CD14-positive monocyte (primary cell): ENCODE measurements at regions of chr16 and their contacts with region 1.

Region 1: GRCh38 chr16:69339289-69340108 is at the starts of genes COG8 and NIP7:
- DNase-seq: peak; percentile 93 to 96 (median 94)
- H3K4me3 ChIP-seq: peak within 1 kb of the TSS; percentile 80 to 93 (median 88)
- H3K4me3 Mint-ChIP-seq: peak within 1 kb of the TSS; percentile 99 to 100
- H3K27ac ChIP-seq: peak within 1 kb of the TSS; percentile 78 to 87
- H3K27ac Mint-ChIP-seq: peak within 1 kb of the TSS; percentile 93 to 99 (median 96)
- H3K4me1 ChIP-seq: peaks cover 20 to 33% of the 10 kb centered on the region in 2 donors
- H3K4me1 Mint-ChIP-seq: peaks cover 25% of the 10 kb centered on the region
- H3K27me3 ChIP-seq: no peaks in the 10 kb centered on the region
- H3K27me3 Mint-ChIP-seq: peaks cover 0 to 3% (median 0%) of the 10 kb centered on the region in 3 donors
- CTCF ChIP-seq: peak; percentile 88
- polyA plus RNA-seq, gene COG8: 11.9 to 24.1 (median 21.6) TPM
- polyA plus RNA-seq, gene NIP7: 3.0 to 16.4 (median 14.2) TPM

Region 2: GRCh38 chr16:68985855-68986254 is 353.6 kb before region 1 on chr16:
- intact Hi-C with region 1: no loop called
- DNase-seq: no peak
- H3K4me3 ChIP-seq: no peak overlapping the region
- H3K4me3 Mint-ChIP-seq: no peak overlapping the region
- H3K27ac ChIP-seq: no peak overlapping the region
- H3K27ac Mint-ChIP-seq: no peak overlapping the region
- H3K4me1 ChIP-seq: no peaks in the 10 kb centered on the region
- H3K4me1 Mint-ChIP-seq: no peaks in the 10 kb centered on the region
- H3K27me3 ChIP-seq: no peaks in the 10 kb centered on the region
- H3K27me3 Mint-ChIP-seq: peaks cover 0 to 2% (median 0%) of the 10 kb centered on the region in 3 donors
- CTCF ChIP-seq: no peak

Region 3: GRCh38 chr16:69381231-69381630 is 41.7 kb after region 1 on chr16:
- intact Hi-C with region 1: loop called (anchors 5 kb)
- DNase-seq: no peak
- H3K4me3 ChIP-seq: no peak overlapping the region
- H3K4me3 Mint-ChIP-seq: peak overlapping the region; percentile 6 to 35
- H3K27ac ChIP-seq: peak overlapping the region in 1 of 2 donors; percentile 64
- H3K27ac Mint-ChIP-seq: peak overlapping the region; percentile 62 to 87 (median 78)
- H3K4me1 ChIP-seq: peaks cover 18 to 29% of the 10 kb centered on the region in 2 donors
- H3K4me1 Mint-ChIP-seq: peaks cover 24% of the 10 kb centered on the region
- H3K27me3 ChIP-seq: no peaks in the 10 kb centered on the region
- H3K27me3 Mint-ChIP-seq: peaks cover 0 to 1% (median 0%) of the 10 kb centered on the region in 3 donors
- CTCF ChIP-seq: no peak

Region 4: DNA sequence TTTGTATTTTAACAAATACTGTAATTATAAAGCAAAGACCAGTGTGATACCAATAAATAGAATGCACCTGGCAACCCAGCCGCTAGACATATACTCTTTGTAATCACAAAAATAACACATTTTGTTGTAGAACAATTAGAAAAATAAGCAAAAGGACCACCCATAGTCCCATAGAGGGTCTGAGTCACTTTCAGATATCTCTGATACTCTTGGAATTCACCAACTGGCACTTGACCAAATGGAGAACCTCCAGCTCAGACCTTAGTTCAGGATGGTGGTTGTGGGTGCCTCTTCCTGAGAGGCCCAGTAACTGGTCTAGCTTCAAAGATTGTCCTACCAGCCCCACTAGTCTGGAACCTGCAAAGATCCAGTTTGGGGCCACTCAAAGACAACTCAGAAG is 47.1 kb after region 1 on chr16:
- intact Hi-C with region 1: loop called (anchors 5 kb)
- DNase-seq: no peak
- H3K4me3 ChIP-seq: no peak overlapping the region
- H3K4me3 Mint-ChIP-seq: no peak overlapping the region
- H3K27ac ChIP-seq: no peak overlapping the region
- H3K27ac Mint-ChIP-seq: peak overlapping the region in 1 of 7 donors; percentile 82
- H3K4me1 ChIP-seq: peaks cover 15 to 21% of the 10 kb centered on the region in 2 donors
- H3K4me1 Mint-ChIP-seq: peaks cover 19% of the 10 kb centered on the region
- H3K27me3 ChIP-seq: no peaks in the 10 kb centered on the region
- H3K27me3 Mint-ChIP-seq: peaks cover 0 to 1% (median 1%) of the 10 kb centered on the region in 3 donors
- CTCF ChIP-seq: no peak

Region 5: DNA sequence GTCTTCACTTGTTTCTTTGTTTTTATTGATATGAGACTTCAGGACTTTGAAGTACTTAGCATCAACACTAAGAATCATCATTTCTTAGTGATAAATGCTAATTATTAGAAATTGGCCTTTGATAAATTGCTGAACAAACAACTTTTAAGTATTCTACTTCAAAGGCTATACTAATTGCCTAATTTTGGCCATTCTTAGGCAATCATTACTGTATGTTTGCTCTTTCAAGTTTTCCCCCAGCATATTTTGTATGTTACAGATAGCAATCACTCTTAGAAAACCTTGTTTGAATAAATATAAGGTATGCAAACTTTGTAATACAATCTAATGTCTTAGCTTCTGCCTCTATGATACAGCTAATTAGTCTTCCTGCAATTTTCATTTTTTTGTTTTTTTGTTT is 340.9 kb after region 1 on chr16:
- intact Hi-C with region 1: no loop called
- DNase-seq: no peak
- H3K4me3 ChIP-seq: no peak overlapping the region
- H3K4me3 Mint-ChIP-seq: no peak overlapping the region
- H3K27ac ChIP-seq: no peak overlapping the region
- H3K27ac Mint-ChIP-seq: no peak overlapping the region
- H3K4me1 ChIP-seq: no peaks in the 10 kb centered on the region
- H3K4me1 Mint-ChIP-seq: no peaks in the 10 kb centered on the region
- H3K27me3 ChIP-seq: no peaks in the 10 kb centered on the region
- H3K27me3 Mint-ChIP-seq: no peaks in the 10 kb centered on the region
- CTCF ChIP-seq: no peak

Region 6: DNA sequence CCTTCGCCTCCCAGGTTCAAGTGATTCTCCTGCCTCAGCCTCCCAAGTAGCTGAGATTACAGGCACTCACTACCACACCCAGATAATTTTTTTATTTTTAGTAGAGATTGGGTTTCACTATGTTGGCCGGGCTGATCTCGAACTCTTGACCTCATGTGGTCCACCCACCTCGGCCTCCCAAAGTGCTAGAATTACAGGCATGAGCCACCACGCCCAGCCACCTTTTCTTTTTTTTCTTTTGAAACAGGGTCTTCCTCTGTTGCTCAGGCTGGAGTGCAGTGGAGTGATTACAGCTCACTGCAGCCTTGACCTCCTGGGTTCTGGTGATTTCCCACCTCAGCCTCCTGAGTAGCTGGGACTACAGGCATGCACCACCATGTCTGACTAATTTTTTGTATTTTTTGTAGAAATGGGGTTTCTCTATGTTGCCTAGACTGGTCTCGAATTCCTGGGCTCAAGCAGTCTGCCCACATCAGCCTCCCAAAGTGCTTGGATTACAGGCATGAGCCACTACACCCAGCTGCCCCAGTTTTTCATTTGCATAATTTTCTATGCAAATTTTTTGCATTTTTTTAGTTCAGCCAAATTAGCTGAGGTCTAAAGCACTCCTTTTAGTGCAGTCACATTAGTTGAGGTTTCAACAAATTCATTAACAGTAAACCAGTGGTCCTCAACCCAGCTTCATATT is 433.9 kb after region 1 on chr16:
- intact Hi-C with region 1: no loop called
- DNase-seq: no peak
- H3K4me3 ChIP-seq: no peak overlapping the region
- H3K4me3 Mint-ChIP-seq: no peak overlapping the region
- H3K27ac ChIP-seq: no peak overlapping the region
- H3K27ac Mint-ChIP-seq: peak overlapping the region in 2 of 7 donors; percentile 44 to 61
- H3K4me1 ChIP-seq: peaks cover 2 to 14% of the 10 kb centered on the region in 2 donors
- H3K4me1 Mint-ChIP-seq: peaks cover 24% of the 10 kb centered on the region
- H3K27me3 ChIP-seq: no peaks in the 10 kb centered on the region
- H3K27me3 Mint-ChIP-seq: no peaks in the 10 kb centered on the region
- CTCF ChIP-seq: no peak

Region 7: DNA sequence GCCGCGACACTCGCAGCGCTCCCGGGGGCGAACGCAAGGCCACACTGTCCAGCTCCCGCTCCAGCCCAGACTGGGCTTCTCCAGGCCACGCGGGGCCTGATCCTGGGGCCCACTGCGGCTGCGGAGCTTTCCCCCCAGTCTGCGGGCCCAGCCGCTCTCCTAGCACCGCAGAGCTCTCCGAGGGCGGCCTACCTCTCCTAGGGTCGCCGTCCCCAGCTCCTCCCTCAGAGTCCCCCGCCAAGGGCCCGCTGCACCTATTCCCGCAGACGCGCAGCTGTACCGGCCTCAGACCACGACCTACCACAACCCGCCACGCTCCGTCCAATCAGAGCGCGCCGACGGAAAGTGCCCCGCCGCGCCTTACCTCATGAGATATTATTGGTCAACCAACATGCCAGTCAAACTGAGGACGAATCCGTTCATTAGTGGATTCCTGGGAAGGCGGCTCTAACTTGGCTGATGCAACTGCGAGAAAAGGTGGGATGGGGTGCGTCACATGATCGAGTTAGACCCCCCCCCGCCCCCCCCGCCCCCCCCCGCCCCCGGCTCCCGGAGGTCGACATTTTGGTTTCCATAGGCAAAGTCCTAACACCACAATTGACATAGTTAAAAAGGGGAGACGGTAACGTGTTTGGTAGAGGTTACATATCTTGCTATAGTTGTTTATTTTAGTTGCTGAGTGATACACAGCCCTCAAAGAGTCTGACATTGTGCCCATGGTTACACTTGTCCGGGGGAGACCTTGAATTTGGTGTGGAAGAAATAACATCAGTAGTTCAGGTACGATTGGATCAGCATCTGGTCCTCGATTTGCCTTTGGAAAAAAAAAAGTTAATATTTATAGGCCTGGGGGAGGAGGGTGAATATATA is 950.0 kb after region 1 on chr16 and contains the start of gene AARS1:
- intact Hi-C with region 1: no loop called
- DNase-seq: peak; percentile 95 to 96 (median 95)
- H3K4me3 ChIP-seq: peak within 1 kb of the TSS; percentile 60 to 87 (median 82)
- H3K4me3 Mint-ChIP-seq: peak within 1 kb of the TSS; percentile 96 to 98
- H3K27ac ChIP-seq: peak within 1 kb of the TSS; percentile 64 to 87
- H3K27ac Mint-ChIP-seq: peak within 1 kb of the TSS; percentile 83 to 96 (median 90)
- H3K4me1 ChIP-seq: peaks cover 11% of the 10 kb centered on the region in 2 donors
- H3K4me1 Mint-ChIP-seq: peaks cover 11% of the 10 kb centered on the region
- H3K27me3 ChIP-seq: no peaks in the 10 kb centered on the region
- H3K27me3 Mint-ChIP-seq: peaks cover 0 to 1% (median 0%) of the 10 kb centered on the region in 3 donors
- CTCF ChIP-seq: no peak
- polyA plus RNA-seq, gene AARS1: 13.9 to 16.6 (median 16.3) TPM